ENCODE measurements at regions of chr11 and their contacts with region 1.

Region 1: DNA sequence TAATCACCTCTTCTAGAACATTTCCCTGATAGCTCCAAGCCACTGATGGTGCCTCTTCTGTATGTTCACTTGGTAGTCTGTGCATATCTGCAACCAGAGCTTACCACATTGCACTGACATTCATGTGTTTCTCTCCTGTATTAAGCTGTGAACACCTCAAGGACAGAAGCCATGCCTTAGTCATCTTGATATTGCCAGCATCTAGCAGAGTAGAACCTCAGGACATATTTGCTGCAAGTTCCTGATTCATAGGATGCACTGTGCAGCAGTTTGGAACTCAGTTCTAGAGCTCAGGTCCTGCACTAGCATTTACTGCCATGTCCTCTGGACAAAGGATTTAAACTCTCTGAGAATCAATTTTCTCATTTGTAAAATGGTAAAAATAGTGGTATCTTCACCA is 722.4 kb upstream of the ANO5 start:
- DNase-seq: no peak
- ATAC-seq: no peak
- H3K4me3 ChIP-seq: no peak overlapping the region
- H3K27ac ChIP-seq: no peak overlapping the region
- H3K4me1 ChIP-seq: no peaks in the 10 kb centered on the region
- H3K27me3 ChIP-seq: peaks cover 0 to 2% of the 10 kb centered on the region in 2 donors

Region 2: DNA sequence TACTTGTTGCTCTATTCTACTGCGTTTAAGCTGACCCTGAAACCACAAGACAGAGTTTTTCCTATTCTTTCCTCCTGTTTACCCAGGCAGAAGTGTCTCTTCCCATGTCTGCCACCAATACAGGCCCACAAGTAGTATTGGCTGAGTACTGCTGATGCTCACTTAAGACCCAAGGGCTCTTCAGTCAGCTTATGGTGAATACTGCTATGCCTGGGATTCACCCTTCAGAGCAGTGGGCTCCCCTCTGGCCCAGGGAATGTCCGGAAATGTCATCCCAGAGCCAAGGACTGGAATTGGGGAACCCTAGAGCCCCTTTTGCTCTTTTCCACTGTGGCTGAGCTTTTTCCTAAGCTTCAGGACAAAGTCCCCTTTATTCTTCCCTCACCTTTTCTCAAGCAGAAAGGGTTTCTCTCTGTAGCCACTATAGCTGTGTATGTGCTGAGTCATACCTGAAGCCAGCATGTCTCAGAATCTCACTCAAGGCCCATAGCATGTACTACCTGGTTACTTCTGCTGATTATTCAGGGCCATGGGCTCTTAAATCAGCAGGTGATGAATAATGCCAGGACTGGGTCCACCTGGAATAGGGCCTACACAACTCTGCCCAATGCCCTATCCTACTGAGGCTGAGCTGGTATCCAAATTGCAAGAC is 23.5 kb before region 1 on chr11:
- intact Hi-C with region 1: loop called in 1 of 2 experiments (anchors 2 kb)
- DNase-seq: no peak
- ATAC-seq: peak; percentile 7
- H3K4me3 ChIP-seq: no peak overlapping the region
- H3K27ac ChIP-seq: no peak overlapping the region
- H3K4me1 ChIP-seq: no peaks in the 10 kb centered on the region
- H3K27me3 ChIP-seq: no peaks in the 10 kb centered on the region